ENCODE measurements at regions of chr4 and their contacts with region 1.

Region 1: DNA sequence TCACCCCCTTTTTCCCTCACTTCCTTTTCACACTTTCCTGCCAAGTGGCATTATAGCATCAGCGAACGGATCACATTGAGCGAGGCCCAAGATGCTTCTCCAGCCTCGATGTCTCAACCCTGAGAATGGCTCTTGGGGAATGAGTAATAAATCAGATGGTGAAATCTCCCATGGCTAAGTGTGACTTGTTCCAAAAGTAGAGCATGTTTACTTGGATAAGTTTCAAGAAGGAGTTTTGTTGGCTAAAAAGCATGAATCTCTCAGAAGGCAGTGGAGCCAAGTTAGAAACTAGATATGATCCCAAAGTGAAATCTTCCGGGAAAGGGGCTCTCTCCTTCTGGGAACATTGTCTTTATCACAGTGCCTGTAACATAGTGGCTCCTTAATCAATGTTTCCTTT is 316.3 kb downstream of the CAMK2D start:
- DNase-seq: peak; percentile 85
- H3K4me3 ChIP-seq: no peak overlapping the region
- H3K27ac ChIP-seq: peak overlapping the region; percentile 69 to 80 (median 72)
- H3K4me1 ChIP-seq: peaks cover 0 to 63% (median 46%) of the 10 kb centered on the region in 4 donors
- H3K27me3 ChIP-seq: no peaks in the 10 kb centered on the region
- CTCF ChIP-seq: no peak
- EP300 ChIP-seq: peak in 1 of 4 donors; percentile 57
- POLR2A ChIP-seq: no peak

Region 2: DNA sequence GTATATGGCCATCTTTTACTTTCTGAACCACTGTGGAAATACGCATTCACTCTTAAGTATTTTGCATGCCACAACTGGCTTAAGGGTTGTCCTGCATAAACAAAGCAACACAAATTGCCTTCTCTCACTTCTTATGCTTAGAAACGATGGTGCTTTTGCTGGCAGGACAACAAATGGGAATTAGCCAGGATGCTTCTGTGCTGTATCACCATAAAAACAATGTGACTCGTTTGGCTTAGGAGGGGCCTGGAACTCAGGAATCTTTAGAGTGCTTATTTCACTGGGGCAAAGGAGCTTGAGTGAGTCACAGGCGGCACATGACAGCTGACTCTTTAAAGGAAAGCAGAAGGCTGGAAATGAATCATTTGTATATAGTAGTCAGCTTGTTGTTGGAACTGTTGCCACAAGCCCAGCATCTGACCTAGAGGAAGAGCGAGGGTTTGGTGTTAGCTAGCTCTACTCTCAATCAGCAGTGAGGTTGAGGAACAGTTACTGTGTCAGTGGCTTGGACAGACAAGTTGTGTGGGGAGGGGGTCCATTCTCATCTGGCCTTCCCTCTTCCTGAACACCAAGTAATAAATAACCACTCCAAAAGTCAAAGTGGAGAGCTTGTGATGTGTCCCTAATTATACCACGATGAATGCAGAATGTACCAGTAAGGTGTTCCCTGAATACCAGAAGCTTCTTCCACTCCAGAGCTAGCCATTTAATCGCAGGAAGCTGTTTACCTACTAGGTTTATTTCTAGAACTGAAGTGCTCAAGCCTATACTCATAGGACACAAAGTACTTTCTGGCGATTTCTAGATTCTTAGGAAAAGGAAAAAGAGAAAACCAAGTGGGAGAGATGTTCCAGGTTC is 23.1 kb after region 1 on chr4:
- intact Hi-C with region 1: loop called (anchors 2 kb)
- DNase-seq: peak; percentile 95
- H3K4me3 ChIP-seq: peak overlapping the region in 2 of 4 donors; percentile 4 to 29
- H3K27ac ChIP-seq: peak overlapping the region; percentile 80 to 89 (median 84)
- H3K4me1 ChIP-seq: peaks cover 0 to 67% (median 55%) of the 10 kb centered on the region in 4 donors
- H3K27me3 ChIP-seq: no peaks in the 10 kb centered on the region
- CTCF ChIP-seq: no peak
- EP300 ChIP-seq: peak; percentile 73 to 92 (median 88)
- POLR2A ChIP-seq: no peak

Measured in sigmoid colon (tissue), 7 donors.